Gastrocnemius medialis (tissue), 4 donors: ENCODE measurements at regions of chr1 and their contacts with region 1.

Region 1: DNA sequence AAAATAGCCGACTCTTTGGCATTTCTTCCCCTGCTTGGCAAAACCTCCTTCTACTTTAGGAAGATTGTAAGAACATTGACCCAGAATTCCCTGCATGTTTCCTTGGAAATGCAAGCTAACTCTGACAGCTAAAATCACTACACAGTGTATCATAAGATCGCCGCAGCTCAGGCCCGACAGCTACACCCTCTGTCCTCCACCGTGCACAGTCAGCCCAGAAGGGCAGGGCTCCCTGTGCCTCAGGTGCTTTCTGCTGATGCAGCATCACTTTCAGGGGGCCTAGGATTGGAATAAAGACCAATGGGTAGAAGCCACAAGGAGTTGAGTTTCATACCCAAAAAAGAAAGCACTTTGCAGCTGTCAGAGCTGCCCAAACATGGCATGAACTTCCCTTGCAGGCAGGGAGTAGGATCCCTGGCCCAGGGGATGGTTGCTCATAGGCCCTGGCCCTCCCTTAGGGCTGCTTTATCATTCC is 145.3 kb downstream of the SEC16B start:
- DNase-seq: no peak
- ATAC-seq: no peak
- H3K4me3 ChIP-seq: no peak overlapping the region
- H3K27ac ChIP-seq: no peak overlapping the region
- H3K4me1 ChIP-seq: no peaks in the 10 kb centered on the region
- H3K27me3 ChIP-seq: no peaks in the 10 kb centered on the region
- CTCF ChIP-seq: no peak
- POLR2A ChIP-seq: no peak

Region 2: DNA sequence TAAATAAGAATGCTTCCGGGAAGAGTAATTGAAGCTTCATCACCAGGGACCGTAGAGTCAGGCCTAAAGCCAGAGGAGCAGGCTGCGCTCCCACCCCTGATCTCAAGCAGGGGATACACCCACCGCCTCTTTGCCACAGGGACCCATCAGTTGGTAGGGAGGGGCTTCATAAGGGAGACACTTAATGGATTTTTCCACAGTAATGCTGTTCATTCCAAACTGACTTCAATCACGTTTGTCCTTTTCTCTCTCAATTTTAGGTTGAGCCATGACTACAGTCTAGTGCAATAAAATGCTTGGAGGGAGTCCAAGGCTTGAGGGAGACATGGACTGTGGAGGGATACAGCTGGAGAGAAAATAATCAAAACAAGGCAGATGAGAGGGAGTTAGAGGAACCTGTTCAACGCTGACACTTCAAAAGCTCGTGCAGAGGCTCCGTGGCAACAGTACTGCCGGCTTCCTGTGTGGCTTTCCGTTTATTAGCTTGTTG is 33.8 kb after region 1 on chr1:
- in situ Hi-C with region 1: no loop called
- intact Hi-C with region 1: loop called (anchors 1 kb)
- DNase-seq: no peak
- ATAC-seq: no peak
- H3K4me3 ChIP-seq: no peak overlapping the region
- H3K27ac ChIP-seq: no peak overlapping the region
- H3K4me1 ChIP-seq: no peaks in the 10 kb centered on the region
- H3K27me3 ChIP-seq: no peaks in the 10 kb centered on the region
- CTCF ChIP-seq: no peak
- POLR2A ChIP-seq: no peak